Adrenal gland (tissue), 19 donors: ENCODE measurements at regions of chrX and their contacts with region 1.

Region 1: DNA sequence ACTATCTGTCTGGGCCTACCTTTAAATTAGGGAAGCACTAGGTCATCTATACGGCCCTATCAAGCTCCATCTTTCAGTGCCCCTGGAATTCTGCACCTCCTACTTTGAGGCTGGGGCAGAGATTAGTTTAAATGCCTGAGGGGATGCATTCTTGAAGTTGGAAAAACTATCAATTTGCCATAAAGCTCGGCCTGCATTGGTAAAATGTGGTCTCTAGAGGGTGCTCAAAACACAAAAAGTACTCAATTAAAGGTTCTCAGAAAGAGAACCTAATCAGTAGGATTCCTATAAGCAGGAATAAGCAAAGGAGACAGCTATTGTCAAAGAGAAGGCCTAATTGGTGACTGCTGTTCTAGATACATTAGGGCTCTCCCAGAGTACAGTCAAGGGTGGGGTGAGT is 111.7 kb downstream of the AMER1 start:
- DNase-seq: peak in 1 of 7 donors; percentile 4
- H3K4me3 ChIP-seq: no peak overlapping the region
- H3K27ac ChIP-seq: no peak overlapping the region
- H3K4me1 ChIP-seq: no peaks in the 10 kb centered on the region
- H3K27me3 ChIP-seq: no peaks in the 10 kb centered on the region
- CTCF ChIP-seq: peak in 5 of 6 experiments; percentile 24 to 44 (median 37)
- POLR2A ChIP-seq: no peak

Region 2: DNA sequence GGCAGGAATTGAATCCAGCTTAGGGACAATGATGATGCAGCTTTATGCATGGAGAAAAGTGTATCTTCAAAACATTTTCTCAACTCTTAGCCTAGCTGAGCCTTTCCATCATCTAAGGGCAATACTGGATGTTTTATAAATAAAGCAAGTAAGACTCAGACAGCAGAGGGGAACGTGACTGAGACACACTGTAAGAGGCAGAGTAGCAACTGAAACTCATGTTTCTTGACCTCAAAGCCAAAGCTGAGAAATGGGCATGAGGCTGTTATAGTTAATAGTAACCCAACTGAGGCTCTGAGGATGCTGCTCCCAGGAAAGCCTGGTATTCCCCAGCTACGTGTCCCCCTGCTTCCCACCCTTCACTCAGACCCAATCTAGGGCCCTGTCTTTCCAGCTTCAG is 353.4 kb before region 1 on chrX:
- intact Hi-C with region 1: no loop called
- DNase-seq: no peak
- H3K4me3 ChIP-seq: no peak overlapping the region
- H3K27ac ChIP-seq: no peak overlapping the region
- H3K4me1 ChIP-seq: no peaks in the 10 kb centered on the region
- H3K27me3 ChIP-seq: no peaks in the 10 kb centered on the region
- CTCF ChIP-seq: no peak
- POLR2A ChIP-seq: no peak

Region 3: GRCh38 chrX:63963095-63963784 is 130.5 kb before region 1 on chrX:
- intact Hi-C with region 1: no loop called
- DNase-seq: no peak
- H3K4me3 ChIP-seq: no peak overlapping the region
- H3K27ac ChIP-seq: no peak overlapping the region
- H3K4me1 ChIP-seq: no peaks in the 10 kb centered on the region
- H3K27me3 ChIP-seq: no peaks in the 10 kb centered on the region
- CTCF ChIP-seq: no peak
- POLR2A ChIP-seq: no peak

Region 4: DNA sequence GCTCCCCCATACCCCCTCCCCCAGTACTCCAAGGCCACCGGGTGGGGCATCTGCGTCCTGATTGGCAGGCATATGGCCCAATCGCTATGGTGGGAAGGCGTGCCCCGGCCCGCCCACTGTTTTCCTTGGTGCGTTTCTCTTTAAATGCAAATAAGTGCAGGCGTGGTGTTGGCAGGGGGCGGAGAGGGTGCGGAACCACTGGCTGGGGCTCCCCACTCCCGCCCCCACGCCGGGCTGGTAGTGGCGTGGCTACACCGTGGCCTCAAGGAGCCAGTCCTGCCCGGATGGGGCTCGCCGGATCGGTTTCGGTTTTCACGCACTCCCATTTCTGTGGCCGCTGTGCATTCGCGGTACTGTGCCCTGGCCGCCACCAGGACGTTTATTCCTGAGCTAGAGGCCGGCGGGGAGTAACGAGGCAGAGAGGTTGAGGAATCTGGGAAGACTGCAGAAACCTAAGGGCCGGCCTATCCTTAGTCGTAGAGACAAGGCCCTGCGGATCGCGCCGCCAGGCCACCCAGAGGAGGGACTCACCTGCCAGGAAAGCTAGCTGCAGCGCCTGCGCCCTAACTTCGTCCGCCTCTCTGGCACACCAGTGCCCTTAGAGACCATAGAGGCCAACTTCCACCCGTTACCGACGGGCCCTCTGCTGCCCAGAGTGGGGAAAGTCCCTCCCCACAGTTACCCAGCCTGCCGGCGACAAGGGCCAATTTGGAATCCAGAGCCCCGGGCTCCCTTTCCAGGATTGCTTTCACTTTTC is 112.2 kb after region 1 on chrX:
- intact Hi-C with region 1: loop called in 1 of 2 experiments (anchors 10 kb)
- DNase-seq: peak; percentile 94 to 98 (median 95)
- H3K4me3 ChIP-seq: peak overlapping the region in 2 of 4 donors; percentile 43 to 70
- H3K27ac ChIP-seq: peak overlapping the region; percentile 65 to 95 (median 88)
- H3K4me1 ChIP-seq: peaks cover 9 to 16% of the 10 kb centered on the region in 2 donors
- H3K27me3 ChIP-seq: no peaks in the 10 kb centered on the region
- CTCF ChIP-seq: peak in 3 of 6 experiments; percentile 17 to 48 (median 20)
- POLR2A ChIP-seq: peak; percentile 70 to 88